MCF 10A (cell line): ENCODE measurements at regions of chr2 and their contacts with region 1.

Region 1: GRCh38 chr2:176140513-176141317 is 10.6 kb upstream of the HOXD4 start:
- DNase-seq: peak; percentile 73
- H3K4me3 Mint-ChIP-seq: peak overlapping the region; percentile 57
- H3K27ac Mint-ChIP-seq: no peak overlapping the region
- H3K4me1 Mint-ChIP-seq: no peaks in the 10 kb centered on the region
- H3K27me3 Mint-ChIP-seq: no peaks in the 10 kb centered on the region
- CTCF ChIP-seq: peak; percentile 96

Region 2: GRCh38 chr2:175576875-175577274 is 563.8 kb before region 1 on chr2:
- CTCF ChIA-PET with region 1: no interaction called
- POLR2A ChIA-PET with region 1: no interaction called
- intact Hi-C with region 1: no loop called
- DNase-seq: no peak
- H3K4me3 Mint-ChIP-seq: no peak overlapping the region
- H3K27ac Mint-ChIP-seq: no peak overlapping the region
- H3K4me1 Mint-ChIP-seq: no peaks in the 10 kb centered on the region
- H3K27me3 Mint-ChIP-seq: no peaks in the 10 kb centered on the region
- CTCF ChIP-seq: no peak

Region 3: GRCh38 chr2:176161819-176162626 is 21.3 kb after region 1 on chr2:
- CTCF ChIA-PET with region 1: interaction called, 10 read pairs
- POLR2A ChIA-PET with region 1: interaction called, 3 read pairs
- intact Hi-C with region 1: no loop called
- DNase-seq: no peak
- H3K4me3 Mint-ChIP-seq: no peak overlapping the region
- H3K27ac Mint-ChIP-seq: no peak overlapping the region
- H3K4me1 Mint-ChIP-seq: no peaks in the 10 kb centered on the region
- H3K27me3 Mint-ChIP-seq: no peaks in the 10 kb centered on the region
- CTCF ChIP-seq: no peak

Region 4: DNA sequence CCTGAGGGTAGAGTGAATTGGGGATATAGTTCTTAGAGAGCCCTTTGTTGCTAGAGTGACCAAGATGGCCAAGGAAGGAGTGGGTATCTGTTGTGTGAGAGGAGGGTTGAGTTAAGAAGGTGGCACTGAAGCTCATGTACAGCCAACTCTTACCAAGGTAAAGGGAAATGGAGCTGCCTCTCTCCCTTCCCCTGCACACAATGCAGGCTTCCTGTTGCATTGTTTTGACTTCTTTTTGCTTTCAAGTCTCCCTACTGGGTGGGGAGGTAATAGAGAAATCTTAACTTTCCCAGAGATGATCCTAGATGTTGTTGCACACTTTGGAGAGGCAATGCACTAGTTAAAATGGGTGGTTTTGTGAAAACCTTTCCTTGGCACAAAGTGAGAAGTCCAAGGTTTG is 71.6 kb after region 1 on chr2:
- CTCF ChIA-PET with region 1: no interaction called
- POLR2A ChIA-PET with region 1: no interaction called
- intact Hi-C with region 1: no loop called
- DNase-seq: no peak
- H3K4me3 Mint-ChIP-seq: no peak overlapping the region
- H3K27ac Mint-ChIP-seq: no peak overlapping the region
- H3K4me1 Mint-ChIP-seq: no peaks in the 10 kb centered on the region
- H3K27me3 Mint-ChIP-seq: no peaks in the 10 kb centered on the region
- CTCF ChIP-seq: no peak

Region 5: GRCh38 chr2:176445956-176446355 is 305.2 kb after region 1 on chr2:
- CTCF ChIA-PET with region 1: interaction called, 190 read pairs
- POLR2A ChIA-PET with region 1: no interaction called
- intact Hi-C with region 1: no loop called
- DNase-seq: no peak
- H3K4me3 Mint-ChIP-seq: no peak overlapping the region
- H3K27ac Mint-ChIP-seq: no peak overlapping the region
- H3K4me1 Mint-ChIP-seq: no peaks in the 10 kb centered on the region
- H3K27me3 Mint-ChIP-seq: no peaks in the 10 kb centered on the region
- CTCF ChIP-seq: no peak

Region 6: DNA sequence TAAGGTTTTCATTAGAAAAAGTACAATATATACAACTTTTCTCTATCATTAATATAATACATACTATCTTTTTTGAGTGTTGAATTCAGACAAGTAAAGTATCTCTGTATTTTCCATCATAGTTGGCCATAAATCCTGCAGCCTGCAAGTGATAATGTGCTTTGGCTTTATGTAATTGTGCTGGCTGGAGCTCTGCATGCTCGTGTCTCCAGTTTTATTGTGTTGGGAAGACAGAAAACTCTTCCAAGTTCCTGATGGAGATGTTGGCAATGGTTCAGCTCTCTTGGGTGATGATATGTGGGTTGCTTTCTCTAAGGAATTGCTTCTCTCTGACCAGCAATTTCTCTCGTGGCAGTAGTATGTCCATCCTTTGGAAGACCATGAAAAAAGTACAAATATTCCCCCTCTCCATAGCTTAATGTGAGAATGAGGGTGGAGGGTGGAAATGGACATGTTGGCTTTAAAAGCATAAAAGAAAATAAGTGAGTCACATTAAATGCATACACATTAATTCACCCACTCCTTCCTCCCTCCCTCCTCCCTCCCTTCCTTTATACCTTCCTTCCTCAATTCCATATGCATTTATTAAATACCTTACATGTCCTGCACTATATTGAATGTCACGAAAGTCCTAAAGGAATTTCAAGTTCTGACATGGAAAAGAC is 472.7 kb after region 1 on chr2:
- CTCF ChIA-PET with region 1: interaction called, 10 read pairs
- POLR2A ChIA-PET with region 1: no interaction called
- intact Hi-C with region 1: no loop called
- DNase-seq: peak; percentile 23
- H3K4me3 Mint-ChIP-seq: no peak overlapping the region
- H3K27ac Mint-ChIP-seq: no peak overlapping the region
- H3K4me1 Mint-ChIP-seq: peaks cover 6% of the 10 kb centered on the region
- H3K27me3 Mint-ChIP-seq: no peaks in the 10 kb centered on the region
- CTCF ChIP-seq: no peak

Region 7: DNA sequence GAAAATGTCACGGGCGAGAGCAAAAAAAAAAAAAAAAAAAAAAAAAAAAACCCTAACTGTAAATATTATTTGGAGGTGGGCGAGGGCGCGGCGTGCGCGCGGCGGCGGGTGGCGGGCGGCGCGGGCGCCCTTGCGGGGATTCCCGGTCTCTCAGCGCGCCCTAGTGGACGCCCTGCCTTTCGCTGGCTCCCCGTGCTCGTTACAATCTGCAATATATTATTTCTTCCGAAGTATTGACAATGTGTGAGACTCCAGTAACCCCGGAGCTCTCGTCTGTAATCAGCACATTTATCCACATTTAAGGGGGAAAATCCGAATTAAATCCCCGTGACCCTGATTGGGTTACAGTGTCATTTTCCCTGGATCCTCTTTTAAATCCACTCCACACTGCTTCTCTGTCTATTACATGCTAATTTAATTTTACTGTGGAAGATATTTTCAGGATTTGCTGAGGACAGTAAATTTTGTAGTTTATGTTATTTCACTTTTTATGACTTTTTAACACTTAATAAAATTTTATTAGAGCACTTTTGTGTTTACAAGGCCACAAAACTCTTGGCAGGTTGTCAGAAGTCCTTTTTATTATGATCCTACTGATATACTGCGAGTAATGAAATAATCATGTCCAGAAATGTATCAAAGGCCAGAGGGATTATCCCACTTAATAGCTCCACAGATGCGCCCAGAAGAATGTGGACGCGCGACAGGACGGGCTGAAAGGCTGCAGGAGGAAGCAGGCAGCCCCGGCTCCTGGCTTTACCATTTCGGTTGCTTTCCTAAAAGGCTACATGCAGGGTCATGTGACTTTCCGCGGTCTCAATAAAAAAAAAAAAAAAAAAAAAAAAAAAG is 497.7 kb after region 1 on chr2:
- CTCF ChIA-PET with region 1: interaction called, 98 read pairs
- POLR2A ChIA-PET with region 1: interaction called, 6 read pairs
- intact Hi-C with region 1: loop called (anchors 1 kb)
- DNase-seq: peak; percentile 61
- H3K4me3 Mint-ChIP-seq: peak overlapping the region; percentile 74
- H3K27ac Mint-ChIP-seq: no peak overlapping the region
- H3K4me1 Mint-ChIP-seq: peaks cover 6% of the 10 kb centered on the region
- H3K27me3 Mint-ChIP-seq: no peaks in the 10 kb centered on the region
- CTCF ChIP-seq: peak; percentile 85